Endothelial cell of umbilical vein (primary cell): ENCODE measurements at regions of chr10 and their contacts with region 1.

Region 1: DNA sequence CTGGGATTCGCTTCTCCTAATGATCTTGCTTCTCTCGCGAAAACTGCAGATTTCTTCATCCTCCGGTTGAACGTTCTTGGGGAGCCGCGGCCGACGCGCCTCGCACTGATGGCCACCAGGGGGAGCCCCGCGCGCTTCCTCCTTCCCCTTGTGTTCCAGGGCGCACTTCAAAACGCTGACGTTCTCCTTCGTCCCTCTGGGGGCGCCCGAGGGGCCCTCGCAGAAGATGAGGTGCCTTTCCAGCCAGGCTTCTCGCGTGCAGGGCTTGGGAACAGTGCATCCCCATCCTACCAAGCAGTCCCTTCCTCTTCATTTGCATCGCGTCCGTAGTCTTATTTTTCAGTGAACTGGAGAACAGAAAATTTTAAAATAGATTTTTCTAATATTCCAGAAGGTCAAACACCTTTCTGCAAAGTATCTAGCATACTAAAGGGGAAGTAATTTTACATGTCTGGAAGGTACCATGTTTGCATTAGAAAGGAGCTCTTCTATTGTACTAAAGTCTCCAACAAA is 22.5 kb downstream of the GSTO2 start:
- DNase-seq: peak; percentile 84
- H3K4me3 ChIP-seq: no peak overlapping the region
- H3K27ac ChIP-seq: no peak overlapping the region
- H3K4me1 ChIP-seq: peaks cover 22% of the 10 kb centered on the region
- H3K27me3 ChIP-seq: peaks cover 4 to 9% of the 10 kb centered on the region in 2 experiments
- CTCF ChIP-seq: peak; percentile 100
- POLR2A ChIP-seq: no peak

Region 2: GRCh38 chr10:104328896-104329710 is 37.6 kb after region 1 on chr10:
- CTCF ChIA-PET with region 1: interaction called, 12 read pairs
- POLR2A ChIA-PET with region 1: no interaction called
- dilution Hi-C with region 1: no loop called
- intact Hi-C with region 1: no loop called
- DNase-seq: peak; percentile 86
- H3K4me3 ChIP-seq: peak overlapping the region in 1 of 3 experiments; percentile 1
- H3K27ac ChIP-seq: peak overlapping the region; percentile 96
- H3K4me1 ChIP-seq: peaks cover 91% of the 10 kb centered on the region
- H3K27me3 ChIP-seq: no peaks in the 10 kb centered on the region
- CTCF ChIP-seq: no peak
- POLR2A ChIP-seq: no peak

Region 3: GRCh38 chr10:104353325-104354048 is 62.0 kb after region 1 on chr10 and contains the start of gene CFAP58:
- CTCF ChIA-PET with region 1: interaction called, 136 read pairs
- POLR2A ChIA-PET with region 1: no interaction called
- dilution Hi-C with region 1: no loop called
- intact Hi-C with region 1: loop called (anchors 1 kb)
- DNase-seq: peak; percentile 88
- H3K4me3 ChIP-seq: peak within 1 kb of the TSS; percentile 38 to 66 (median 42)
- H3K27ac ChIP-seq: no peak within 1 kb of the TSS
- H3K4me1 ChIP-seq: peaks cover 13% of the 10 kb centered on the region
- H3K27me3 ChIP-seq: peaks cover 0 to 5% of the 10 kb centered on the region in 2 experiments
- CTCF ChIP-seq: peak; percentile 66 to 75
- POLR2A ChIP-seq: no peak
- total RNA-seq, gene CFAP58: 0.29 and 0.35 TPM in 2 replicates